ENCODE measurements at regions of chr1 and their contacts with region 1.

Region 1: DNA sequence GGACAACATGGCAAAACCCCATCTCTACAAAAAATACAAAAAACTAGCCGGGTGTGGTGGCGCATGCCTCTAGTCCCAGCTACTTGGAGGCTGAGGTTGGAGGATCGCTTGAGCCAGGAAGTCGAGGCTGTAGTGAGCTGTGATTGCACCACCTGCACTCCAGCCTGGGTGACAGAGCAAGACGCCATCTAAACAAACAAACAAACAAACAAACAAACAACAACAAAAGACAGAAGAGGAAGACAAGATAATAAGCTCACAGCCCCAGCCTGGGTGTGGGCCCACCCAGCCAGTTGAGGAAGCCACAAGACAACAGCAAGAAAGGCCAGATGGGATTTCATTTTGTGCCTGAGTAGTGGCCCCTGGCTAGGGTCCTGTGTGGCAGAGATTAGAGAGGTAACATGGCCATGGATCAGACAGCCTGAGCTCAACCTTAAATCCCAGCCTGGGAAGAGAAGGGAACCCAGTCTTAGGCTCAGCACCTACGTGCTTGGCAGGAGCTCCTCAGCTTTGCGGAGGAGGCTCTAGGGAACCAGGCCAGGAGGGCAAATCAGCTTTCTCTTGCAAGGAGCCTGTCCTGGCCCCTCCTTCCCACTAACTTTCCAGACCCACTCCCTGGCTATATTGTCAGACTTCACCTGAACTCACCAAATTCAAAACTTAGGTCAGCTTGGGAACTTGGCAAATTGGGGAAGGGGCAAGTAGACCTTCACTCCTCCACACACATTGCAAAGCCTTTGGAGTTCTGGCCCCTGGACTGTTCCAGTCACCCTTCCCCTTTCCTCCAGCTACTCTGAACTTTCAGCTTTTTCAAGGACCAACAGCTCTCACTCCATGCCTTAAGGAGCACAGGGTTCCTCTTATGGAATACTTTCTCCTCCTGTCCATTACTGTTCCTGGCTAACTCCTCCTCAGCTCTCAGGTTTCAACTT is 5.1 kb upstream of the BEST4 start:
- DNase-seq: no peak
- ATAC-seq: peak; percentile 11; the same call in 1 of the 2 replicates
- H3K4me3 ChIP-seq: no peak overlapping the region
- H3K27ac ChIP-seq: 0 out of 2 replicates have a peak overlapping the region, but pooled peaks have one; percentile 23
- H3K4me1 ChIP-seq: no peaks in the 10 kb centered on the region
- H3K27me3 ChIP-seq: no peaks in the 10 kb centered on the region
- CTCF ChIP-seq: no peak

Region 2: DNA sequence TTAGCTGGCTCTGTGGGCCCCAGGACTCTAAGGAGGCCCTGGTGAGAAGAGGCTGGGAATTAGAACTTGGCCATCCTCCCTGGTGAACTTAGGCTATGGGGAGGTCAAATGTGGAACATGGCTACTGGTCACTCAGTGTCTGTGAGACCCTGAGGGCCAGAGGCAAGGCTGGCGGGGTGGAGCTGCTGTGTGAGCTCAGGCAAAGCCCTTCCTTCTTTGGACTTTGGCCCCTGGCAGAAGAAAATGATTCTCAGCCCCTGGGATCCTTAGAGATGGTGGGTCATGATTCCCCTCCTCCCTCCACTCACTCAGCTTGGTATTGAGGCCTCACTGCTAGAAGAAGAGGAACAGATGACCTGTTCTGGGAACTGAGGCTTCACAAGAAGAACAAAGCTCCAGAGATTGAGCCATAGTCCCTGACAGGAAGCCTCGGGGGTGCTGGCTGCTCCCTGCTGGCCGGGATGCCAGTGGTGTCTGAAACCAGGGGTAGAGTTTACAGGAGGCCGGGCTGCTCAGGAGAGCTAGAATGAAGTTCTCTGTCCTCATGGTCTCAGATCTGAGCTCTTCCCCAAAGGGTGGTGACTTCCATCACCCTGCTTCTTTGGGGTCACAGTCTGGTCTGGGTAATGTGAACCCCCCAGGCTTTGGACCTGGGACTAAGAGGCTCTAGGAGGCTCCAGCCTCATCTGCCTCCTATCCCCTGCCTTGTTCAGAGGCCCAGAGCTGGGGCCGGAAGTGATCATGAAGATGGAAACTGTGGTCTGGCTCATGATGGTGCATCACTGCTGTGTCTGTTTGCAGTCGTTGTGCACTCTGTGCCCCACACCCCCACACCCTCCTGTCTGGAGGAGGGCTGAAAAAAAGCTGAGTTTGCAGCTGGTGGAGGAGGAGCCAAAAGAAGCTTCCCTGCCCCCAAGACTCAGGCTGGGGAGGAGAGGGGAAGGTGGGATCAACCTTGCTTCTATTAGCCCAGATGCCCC is 16.2 kb after region 1 on chr1:
- CTCF ChIA-PET with region 1: interaction called, 10 read pairs
- POLR2A ChIA-PET with region 1: no interaction called
- in situ Hi-C with region 1: no loop called
- intact Hi-C with region 1: no loop called
- DNase-seq: no peak
- ATAC-seq: no peak
- H3K4me3 ChIP-seq: no peak overlapping the region; a peak in 1 of 4 replicates
- H3K27ac ChIP-seq: peak overlapping the region; percentile 94
- H3K4me1 ChIP-seq: peaks cover 47% of the 10 kb centered on the region
- H3K27me3 ChIP-seq: no peaks in the 10 kb centered on the region
- CTCF ChIP-seq: no peak

Region 3: GRCh38 chr1:44862829-44863401 is 69.9 kb after region 1 on chr1:
- CTCF ChIA-PET with region 1: interaction called, 10 read pairs
- POLR2A ChIA-PET with region 1: interaction called, 7 read pairs
- in situ Hi-C with region 1: no loop called
- intact Hi-C with region 1: no loop called
- DNase-seq: no peak
- ATAC-seq: no peak
- H3K4me3 ChIP-seq: no peak overlapping the region
- H3K27ac ChIP-seq: no peak overlapping the region
- H3K4me1 ChIP-seq: no peaks in the 10 kb centered on the region
- H3K27me3 ChIP-seq: no peaks in the 10 kb centered on the region
- CTCF ChIP-seq: no peak

Region 4: DNA sequence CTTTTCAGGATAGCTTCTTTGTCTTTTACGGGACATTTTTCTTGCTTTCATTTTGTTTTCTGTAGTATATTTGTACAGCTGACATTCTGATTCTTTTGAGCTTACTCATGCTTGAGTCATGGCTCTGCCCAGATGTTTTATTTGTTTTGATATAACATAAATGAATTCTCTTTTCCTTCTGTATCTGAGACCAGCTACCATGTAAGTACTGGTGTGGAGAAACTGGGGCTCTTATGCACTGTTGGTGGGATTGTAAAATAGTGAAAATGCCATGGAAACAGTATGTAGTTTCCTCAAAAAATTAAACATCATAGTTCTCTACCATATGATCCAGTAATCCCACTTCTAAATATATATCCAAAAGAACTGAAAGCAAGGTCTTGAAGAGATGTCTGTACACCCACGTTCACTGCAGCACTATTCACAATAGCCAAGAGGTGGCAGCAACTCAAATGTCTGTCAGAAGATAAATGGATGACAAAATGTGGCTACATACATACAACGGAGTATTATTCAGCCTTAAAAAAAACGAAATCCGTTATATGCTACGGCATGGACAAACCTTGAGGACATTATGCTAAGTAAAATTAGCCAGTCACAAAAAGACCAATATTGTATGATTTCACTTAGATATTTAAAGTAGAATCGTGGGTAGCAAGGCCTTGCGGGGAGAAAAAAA is 131.9 kb after region 1 on chr1:
- CTCF ChIA-PET with region 1: no interaction called
- POLR2A ChIA-PET with region 1: interaction called, 14 read pairs
- in situ Hi-C with region 1: no loop called
- intact Hi-C with region 1: no loop called
- DNase-seq: peak; percentile 83
- ATAC-seq: peak; percentile 95
- H3K4me3 ChIP-seq: peak overlapping the region in 1 of 2 experiments; percentile 14; a peak in 1 of 4 replicates
- H3K27ac ChIP-seq: no peak overlapping the region
- H3K4me1 ChIP-seq: peaks cover 8% of the 10 kb centered on the region; the same call in 1 of the 2 replicates
- H3K27me3 ChIP-seq: no peaks in the 10 kb centered on the region
- CTCF ChIP-seq: peak; percentile 43; the same call in 1 of the 2 replicates